PC-9 (cell line): ENCODE measurements at regions of chr17 and their contacts with region 1.

Region 1: GRCh38 chr17:78708510-78708973 is 73.5 kb downstream of the CYTH1 start:
- DNase-seq: peak; percentile 46 to 66
- H3K4me3 ChIP-seq: no peak overlapping the region
- H3K27ac ChIP-seq: no peak overlapping the region
- H3K4me1 ChIP-seq: peaks cover 37% of the 10 kb centered on the region
- H3K27me3 ChIP-seq: no peaks in the 10 kb centered on the region
- CTCF ChIP-seq: peak; percentile 82

Region 2: GRCh38 chr17:78263063-78263743 is 445.3 kb before region 1 on chr17:
- CTCF ChIA-PET with region 1: no interaction called
- POLR2A ChIA-PET with region 1: no interaction called
- intact Hi-C with region 1: no loop called
- DNase-seq: no peak
- H3K4me3 ChIP-seq: no peak overlapping the region
- H3K27ac ChIP-seq: no peak overlapping the region
- H3K4me1 ChIP-seq: no peaks in the 10 kb centered on the region
- H3K27me3 ChIP-seq: no peaks in the 10 kb centered on the region
- CTCF ChIP-seq: no peak

Region 3: GRCh38 chr17:78444392-78444791 is 264.1 kb before region 1 on chr17:
- CTCF ChIA-PET with region 1: interaction called, 3 read pairs
- POLR2A ChIA-PET with region 1: no interaction called
- intact Hi-C with region 1: loop called (anchors 2 kb)
- DNase-seq: no peak
- H3K4me3 ChIP-seq: no peak overlapping the region
- H3K27ac ChIP-seq: no peak overlapping the region
- H3K4me1 ChIP-seq: no peaks in the 10 kb centered on the region
- H3K27me3 ChIP-seq: no peaks in the 10 kb centered on the region
- CTCF ChIP-seq: no peak

Region 4: DNA sequence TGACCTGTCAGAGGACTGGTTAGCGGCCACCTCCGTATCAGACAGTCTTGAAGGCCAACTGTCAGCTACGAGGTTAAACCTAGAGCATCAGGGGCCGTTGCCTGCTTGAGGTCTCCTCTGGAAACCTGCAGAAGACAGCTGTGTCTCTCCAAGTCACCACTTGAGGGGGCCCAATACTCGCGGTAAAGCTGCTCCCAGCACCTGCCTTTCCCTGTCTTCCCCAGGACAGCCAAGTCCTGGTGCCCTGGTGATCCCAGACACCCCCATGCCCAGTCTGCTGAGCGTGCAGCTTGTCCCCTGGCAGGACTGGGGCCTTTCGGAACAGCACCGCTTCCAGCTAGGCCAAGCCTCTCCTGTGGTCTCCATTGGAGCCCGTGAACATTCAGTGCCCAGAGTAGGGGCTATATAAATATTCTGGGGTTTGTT is 211.4 kb before region 1 on chr17:
- CTCF ChIA-PET with region 1: interaction called, 7 read pairs
- POLR2A ChIA-PET with region 1: no interaction called
- intact Hi-C with region 1: loop called (anchors 1 kb)
- DNase-seq: peak; percentile 61 to 79
- H3K4me3 ChIP-seq: no peak overlapping the region
- H3K27ac ChIP-seq: no peak overlapping the region
- H3K4me1 ChIP-seq: no peaks in the 10 kb centered on the region
- H3K27me3 ChIP-seq: no peaks in the 10 kb centered on the region
- CTCF ChIP-seq: peak; percentile 73

Region 5: GRCh38 chr17:78592991-78593329 is 115.6 kb before region 1 on chr17:
- CTCF ChIA-PET with region 1: no interaction called
- POLR2A ChIA-PET with region 1: no interaction called
- intact Hi-C with region 1: loop called (anchors 1 kb)
- DNase-seq: no peak
- H3K4me3 ChIP-seq: no peak overlapping the region; the same call in 1 of the 2 replicates
- H3K27ac ChIP-seq: peak overlapping the region; percentile 92
- H3K4me1 ChIP-seq: peaks cover 67% of the 10 kb centered on the region
- H3K27me3 ChIP-seq: no peaks in the 10 kb centered on the region
- CTCF ChIP-seq: no peak

Region 6: GRCh38 chr17:78665952-78666920 is 42.3 kb before region 1 on chr17:
- CTCF ChIA-PET with region 1: no interaction called
- POLR2A ChIA-PET with region 1: no interaction called
- intact Hi-C with region 1: loop called (anchors 5 kb)
- DNase-seq: peak in 1 of 2 experiments; percentile 71
- H3K4me3 ChIP-seq: no peak overlapping the region
- H3K27ac ChIP-seq: no peak overlapping the region
- H3K4me1 ChIP-seq: peaks cover 9% of the 10 kb centered on the region
- H3K27me3 ChIP-seq: no peaks in the 10 kb centered on the region
- CTCF ChIP-seq: no peak

Region 7: GRCh38 chr17:78745407-78746088 is 37.0 kb after region 1 on chr17:
- CTCF ChIA-PET with region 1: interaction called, 19 read pairs
- POLR2A ChIA-PET with region 1: no interaction called
- intact Hi-C with region 1: no loop called
- DNase-seq: peak in 1 of 2 experiments; percentile 20
- H3K4me3 ChIP-seq: no peak overlapping the region
- H3K27ac ChIP-seq: no peak overlapping the region
- H3K4me1 ChIP-seq: peaks cover 16% of the 10 kb centered on the region
- H3K27me3 ChIP-seq: no peaks in the 10 kb centered on the region
- CTCF ChIP-seq: peak; percentile 76